ENCODE measurements at regions of chrX and their contacts with region 1.

Region 1: GRCh38 chrX:9341291-9342201 is 123.3 kb upstream of the TBL1X start:
- DNase-seq: peak; percentile 73
- ATAC-seq: peak; percentile 30

Region 2: GRCh38 chrX:9464435-9465371 is 123.2 kb after region 1 on chrX and contains the start of gene TBL1X:
- intact Hi-C with region 1: loop called (anchors 5 kb)
- DNase-seq: peak; percentile 79
- ATAC-seq: peak; percentile 77
- total RNA-seq, gene TBL1X: 12.3 TPM